ENCODE measurements at regions of chr4 and their contacts with region 1.

Region 1: GRCh38 chr4:1870578-1871443 is at the start of gene NSD2:
- DNase-seq: peak; percentile 89
- H3K4me3 Mint-ChIP-seq: peak within 1 kb of the TSS; percentile 100
- H3K27ac Mint-ChIP-seq: peak within 1 kb of the TSS; percentile 100
- H3K4me1 Mint-ChIP-seq: peaks cover 38% of the 10 kb centered on the region
- H3K27me3 Mint-ChIP-seq: peaks cover 1% of the 10 kb centered on the region
- total RNA-seq, gene NSD2: 200 and 202 TPM in 2 replicates

Region 2: DNA sequence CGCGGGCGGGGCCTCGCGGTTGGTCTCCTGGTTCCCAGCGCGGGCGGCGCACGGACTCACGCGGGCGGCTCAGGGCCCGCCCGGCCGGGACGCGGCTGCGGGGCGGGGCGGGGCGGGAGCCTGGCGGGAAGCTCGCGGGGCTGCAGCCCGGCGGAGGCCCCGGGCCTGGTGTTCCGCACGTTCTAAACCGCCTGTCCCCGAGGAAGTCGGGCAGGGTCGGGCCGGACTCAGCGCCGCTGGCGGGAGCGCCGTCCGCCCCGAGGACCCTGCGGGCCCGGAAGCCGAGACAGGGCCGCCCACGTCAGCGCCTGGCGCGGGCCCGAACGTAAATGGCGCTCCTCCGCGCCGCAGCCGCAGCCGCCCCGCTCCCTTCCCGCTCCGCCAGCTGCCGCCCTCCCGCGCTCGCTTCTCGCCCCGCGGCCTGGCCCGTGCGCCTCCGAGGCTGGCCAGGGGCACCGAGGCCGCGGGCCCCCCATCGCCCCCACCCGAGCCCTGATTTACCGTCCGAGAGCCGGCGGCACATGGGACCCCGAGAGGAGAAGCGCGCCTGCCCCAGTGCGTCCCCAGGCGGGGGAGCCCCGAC is 621.6 kb before region 1 on chr4:
- intact Hi-C with region 1: loop called (anchors 5 kb)
- DNase-seq: peak; percentile 83
- H3K4me3 Mint-ChIP-seq: peak overlapping the region; percentile 89
- H3K27ac Mint-ChIP-seq: peak overlapping the region; percentile 96
- H3K4me1 Mint-ChIP-seq: peaks cover 57% of the 10 kb centered on the region
- H3K27me3 Mint-ChIP-seq: no peaks in the 10 kb centered on the region

Region 3: GRCh38 chr4:1712216-1713002 is 158.4 kb before region 1 on chr4 and contains the start of gene SLBP:
- intact Hi-C with region 1: loop called (anchors 2 kb)
- DNase-seq: peak; percentile 99
- H3K4me3 Mint-ChIP-seq: peak within 1 kb of the TSS; percentile 99
- H3K27ac Mint-ChIP-seq: peak within 1 kb of the TSS; percentile 89
- H3K4me1 Mint-ChIP-seq: peaks cover 59% of the 10 kb centered on the region
- H3K27me3 Mint-ChIP-seq: no peaks in the 10 kb centered on the region
- total RNA-seq, gene SLBP: 136 and 140 TPM in 2 replicates

Region 4: GRCh38 chr4:1842993-1843448 is 27.8 kb before region 1 on chr4:
- intact Hi-C with region 1: no loop called
- DNase-seq: no peak
- H3K4me3 Mint-ChIP-seq: no peak overlapping the region
- H3K27ac Mint-ChIP-seq: no peak overlapping the region
- H3K4me1 Mint-ChIP-seq: peaks cover 17% of the 10 kb centered on the region
- H3K27me3 Mint-ChIP-seq: no peaks in the 10 kb centered on the region

Region 5: DNA sequence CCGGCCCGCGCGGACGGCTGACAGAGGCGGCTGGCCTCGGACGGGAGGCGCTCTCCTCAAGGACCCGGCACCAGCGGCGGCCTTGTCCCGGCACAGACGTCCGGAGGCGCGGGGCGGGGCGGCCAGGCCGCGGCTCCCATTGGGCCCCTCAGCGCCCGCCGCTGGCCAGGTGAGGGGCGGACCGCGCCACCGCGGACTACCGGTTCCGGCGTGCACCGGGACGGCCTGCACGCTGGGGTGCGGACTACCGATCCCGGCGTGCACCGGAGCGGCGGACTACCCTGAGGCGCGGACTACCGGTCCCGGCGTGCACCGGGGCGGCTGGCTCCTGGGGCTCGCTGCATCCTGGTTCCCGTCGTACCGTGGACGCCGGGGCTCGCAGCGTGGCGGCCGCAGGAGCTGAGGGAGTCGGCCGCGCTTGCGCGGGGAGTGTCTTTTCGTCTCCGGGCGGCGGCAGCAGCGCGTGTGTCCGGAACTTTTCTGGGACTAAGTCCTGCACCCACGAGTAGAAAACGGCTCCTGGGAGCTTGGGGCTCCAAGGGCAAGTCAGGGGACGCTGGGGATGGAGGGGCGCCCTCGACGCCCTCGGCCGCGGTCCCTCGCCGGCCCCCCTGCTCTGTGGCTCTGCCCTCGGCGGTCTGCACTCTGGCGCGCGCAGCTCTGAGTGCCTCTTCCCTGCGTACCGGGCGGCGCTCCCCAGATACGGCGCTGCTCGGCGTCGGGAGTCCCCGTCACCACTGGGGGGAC is 14.6 kb before region 1 on chr4 and contains the start of gene LETM1:
- intact Hi-C with region 1: loop called (anchors 1 kb)
- DNase-seq: peak; percentile 95
- H3K4me3 Mint-ChIP-seq: peak within 1 kb of the TSS; percentile 87
- H3K27ac Mint-ChIP-seq: peak within 1 kb of the TSS; percentile 68
- H3K4me1 Mint-ChIP-seq: peaks cover 34% of the 10 kb centered on the region
- H3K27me3 Mint-ChIP-seq: no peaks in the 10 kb centered on the region
- total RNA-seq, gene LETM1: 93.9 and 101 TPM in 2 replicates

Region 6: GRCh38 chr4:1996866-1997611 is 126.2 kb after region 1 on chr4:
- intact Hi-C with region 1: loop called (anchors 1 kb)
- DNase-seq: no peak
- H3K4me3 Mint-ChIP-seq: no peak overlapping the region
- H3K27ac Mint-ChIP-seq: no peak overlapping the region
- H3K4me1 Mint-ChIP-seq: peaks cover 12% of the 10 kb centered on the region
- H3K27me3 Mint-ChIP-seq: no peaks in the 10 kb centered on the region

Region 7: GRCh38 chr4:2220016-2220630 is 349.3 kb after region 1 on chr4:
- intact Hi-C with region 1: no loop called
- DNase-seq: peak; percentile 66
- H3K4me3 Mint-ChIP-seq: no peak overlapping the region
- H3K27ac Mint-ChIP-seq: no peak overlapping the region
- H3K4me1 Mint-ChIP-seq: peaks cover 12% of the 10 kb centered on the region
- H3K27me3 Mint-ChIP-seq: no peaks in the 10 kb centered on the region

Region 8: DNA sequence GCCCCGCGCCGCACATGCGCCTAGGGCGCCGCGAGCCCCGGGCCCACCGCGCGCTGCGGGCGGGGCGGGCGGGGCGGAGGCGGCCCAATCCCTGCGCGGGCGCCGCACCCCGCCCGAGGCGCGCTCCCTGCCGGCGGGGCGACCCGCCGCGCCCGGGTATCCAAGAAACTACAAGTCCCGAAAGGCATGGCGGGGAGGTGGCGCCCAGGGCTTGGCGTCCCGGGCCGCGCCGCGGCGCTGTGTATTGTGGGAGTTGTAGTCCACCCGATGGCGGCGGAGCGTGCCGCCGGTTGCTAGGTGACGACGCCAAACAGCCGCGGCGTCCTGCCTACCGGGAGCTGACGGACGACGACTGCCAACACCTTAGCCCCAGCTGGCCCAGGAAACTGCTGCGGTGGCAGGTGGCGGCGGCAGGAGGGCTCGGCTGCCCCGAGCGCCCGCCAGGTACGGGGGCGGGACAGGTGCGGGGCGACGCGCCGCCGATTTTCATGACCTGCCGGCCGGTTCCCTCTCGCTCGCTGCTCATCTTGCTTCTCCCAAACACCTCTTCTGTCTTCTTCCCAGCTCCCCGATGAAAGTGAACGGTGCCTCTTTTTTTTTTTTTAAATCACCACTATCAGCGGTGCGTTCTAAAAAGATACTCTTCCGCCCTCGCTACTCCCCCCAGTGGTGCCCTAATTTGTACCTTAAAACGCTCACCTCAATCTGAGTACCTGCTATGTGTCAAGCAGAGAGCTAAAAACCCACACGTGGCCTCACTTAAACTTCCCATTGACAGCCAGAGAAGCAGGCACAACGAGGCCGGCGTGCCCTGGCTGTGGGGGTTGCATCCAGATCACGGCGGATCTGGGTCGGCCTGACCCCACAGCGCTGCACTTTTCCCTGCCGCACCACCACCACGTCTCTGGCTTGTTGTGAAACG is 548.1 kb after region 1 on chr4 and contains the start of gene CFAP99:
- intact Hi-C with region 1: loop called (anchors 5 kb)
- DNase-seq: peak; percentile 94
- H3K4me3 Mint-ChIP-seq: peak within 1 kb of the TSS; percentile 85
- H3K27ac Mint-ChIP-seq: peak within 1 kb of the TSS; percentile 82
- H3K4me1 Mint-ChIP-seq: peaks cover 39% of the 10 kb centered on the region
- H3K27me3 Mint-ChIP-seq: peaks cover 55% of the 10 kb centered on the region
- total RNA-seq, gene CFAP99: not detected in 2 replicates

Region 9: GRCh38 chr4:2963175-2963965 is 1092.6 kb after region 1 on chr4 and contains the starts of genes GRK4 and NOP14:
- intact Hi-C with region 1: loop called (anchors 2 kb)
- DNase-seq: peak; percentile 96
- H3K4me3 Mint-ChIP-seq: peak within 1 kb of the TSS; percentile 97
- H3K27ac Mint-ChIP-seq: peak within 1 kb of the TSS; percentile 92
- H3K4me1 Mint-ChIP-seq: peaks cover 28% of the 10 kb centered on the region
- H3K27me3 Mint-ChIP-seq: no peaks in the 10 kb centered on the region
- total RNA-seq, gene GRK4: 4.4 and 4.5 TPM in 2 replicates
- total RNA-seq, gene NOP14: 140 and 142 TPM in 2 replicates

Region 10: DNA sequence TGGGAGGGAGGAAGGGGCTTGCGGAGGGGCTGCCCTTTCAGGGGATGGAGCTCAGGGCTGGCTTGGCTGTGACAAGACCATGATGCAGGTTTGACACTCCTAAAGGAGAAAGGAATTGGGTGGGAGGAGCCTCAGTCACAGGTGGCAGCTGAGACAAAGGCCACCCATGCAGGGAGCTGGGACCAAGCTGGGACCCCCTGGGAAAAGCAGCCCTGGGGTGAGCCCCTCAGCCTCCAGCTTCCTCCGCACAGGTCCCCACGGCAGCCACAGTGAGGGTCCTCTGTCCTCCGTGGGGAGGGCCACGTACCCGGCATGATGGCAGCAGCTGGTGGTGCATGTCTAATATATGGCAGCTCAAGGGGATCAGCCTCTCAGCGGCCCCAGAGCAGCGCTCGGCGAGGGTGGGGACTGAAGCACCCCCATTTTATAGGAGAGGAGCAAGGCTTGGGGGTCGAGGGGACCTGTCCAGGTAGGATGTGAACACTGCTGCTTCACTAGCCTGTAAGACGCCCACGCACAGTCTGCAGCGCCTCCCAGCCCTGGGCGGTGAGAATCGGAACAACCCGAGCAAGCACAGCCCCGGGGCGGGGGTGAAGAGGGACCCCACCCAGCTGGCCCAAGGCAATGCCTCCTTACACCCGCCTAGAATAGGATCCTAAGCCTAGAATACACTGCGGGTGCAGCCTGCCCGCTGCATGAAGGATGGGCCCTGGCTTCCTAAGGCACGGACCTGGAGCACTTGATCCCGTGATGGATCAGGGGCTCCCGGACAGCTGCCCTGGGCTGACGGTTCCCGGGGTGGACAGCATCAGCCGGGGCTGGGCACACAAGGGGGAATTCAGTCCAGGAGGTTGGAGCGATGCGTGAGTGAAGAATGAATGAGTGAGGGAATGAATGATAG is 1912.8 kb after region 1 on chr4:
- intact Hi-C with region 1: no loop called
- DNase-seq: no peak
- H3K4me3 Mint-ChIP-seq: no peak overlapping the region
- H3K27ac Mint-ChIP-seq: no peak overlapping the region
- H3K4me1 Mint-ChIP-seq: no peaks in the 10 kb centered on the region
- H3K27me3 Mint-ChIP-seq: no peaks in the 10 kb centered on the region